ENCODE measurements at regions of chr3 and their contacts with region 1.

Region 1: DNA sequence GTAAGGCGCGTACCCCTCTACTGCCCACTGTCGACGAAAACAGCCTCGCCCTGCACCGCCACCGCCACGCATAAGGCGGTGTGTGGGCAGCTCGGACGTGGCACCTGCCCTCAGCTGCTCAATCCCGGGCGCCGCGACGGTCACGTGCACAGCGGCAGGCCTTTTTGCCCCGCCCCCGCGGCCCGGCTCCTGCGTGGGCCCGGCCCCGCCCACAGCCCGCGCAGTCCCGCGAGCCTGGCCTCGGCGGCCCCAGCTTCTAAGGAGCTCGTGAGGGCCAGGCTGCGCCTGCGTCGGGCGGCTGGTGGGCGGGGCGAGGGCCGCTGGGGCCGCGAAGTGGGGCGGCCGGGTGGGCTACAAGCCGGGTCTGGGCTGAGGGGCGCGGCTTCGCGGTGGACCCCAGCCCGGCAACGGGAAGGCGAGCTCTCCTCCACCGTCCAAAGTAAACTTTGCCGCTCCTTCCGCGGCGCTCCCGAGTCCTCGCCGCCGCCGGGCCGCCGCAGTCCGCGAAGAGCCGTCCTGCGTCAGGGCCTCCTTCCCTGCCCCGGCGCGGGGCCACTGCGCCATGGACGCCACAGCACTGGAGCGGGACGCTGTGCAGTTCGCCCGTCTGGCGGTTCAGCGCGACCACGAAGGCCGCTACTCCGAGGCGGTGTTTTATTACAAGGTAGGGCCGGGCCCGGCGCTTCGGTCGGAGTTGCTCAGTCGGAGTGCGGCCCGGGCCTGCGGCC is at the start of gene CAPN7:
- DNase-seq: peak; percentile 99
- H3K4me3 Mint-ChIP-seq: peak within 1 kb of the TSS; percentile 92
- H3K27ac Mint-ChIP-seq: peak within 1 kb of the TSS; percentile 93
- H3K4me1 Mint-ChIP-seq: peaks cover 18% of the 10 kb centered on the region
- H3K27me3 Mint-ChIP-seq: no peaks in the 10 kb centered on the region
- total RNA-seq, gene CAPN7: 25.4 and 29.9 TPM in 2 replicates

Region 2: DNA sequence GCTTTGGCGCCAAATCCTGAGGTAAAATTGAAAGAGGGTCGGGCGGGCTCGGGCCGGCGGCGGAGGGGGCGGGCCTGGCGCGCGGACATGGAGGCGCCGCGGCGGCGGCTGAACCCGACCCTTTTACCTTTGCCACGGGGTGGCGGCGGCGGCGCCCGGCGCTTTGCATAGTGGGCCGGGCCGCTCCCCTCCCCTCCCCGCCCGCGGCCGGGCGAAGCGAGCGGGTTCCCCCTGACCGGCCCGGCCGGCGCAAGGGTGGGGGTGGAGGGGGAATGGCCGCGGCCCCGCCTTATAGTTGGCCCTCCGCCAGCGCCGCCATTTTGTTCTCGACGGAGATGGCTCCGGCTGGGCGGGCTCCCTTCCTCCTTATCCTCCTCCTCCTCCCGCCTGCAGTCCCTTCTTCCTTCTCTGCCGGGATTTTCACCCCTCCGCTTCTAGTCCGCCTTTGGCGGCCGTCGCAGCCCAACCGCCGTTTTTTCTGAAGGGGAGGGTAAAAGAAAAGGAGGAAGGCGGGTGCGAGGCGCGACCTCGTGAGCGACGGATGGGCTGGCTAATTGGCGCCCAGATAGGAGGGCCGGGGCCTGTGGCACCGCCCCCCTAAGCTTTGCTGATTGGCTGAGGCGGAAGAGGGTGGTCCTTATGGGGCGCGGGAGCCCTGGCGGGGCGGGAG is 258.1 kb before region 1 on chr3:
- intact Hi-C with region 1: loop called (anchors 1 kb)
- DNase-seq: peak; percentile 99
- H3K4me3 Mint-ChIP-seq: peak overlapping the region; percentile 100
- H3K27ac Mint-ChIP-seq: peak overlapping the region; percentile 100
- H3K4me1 Mint-ChIP-seq: peaks cover 32% of the 10 kb centered on the region
- H3K27me3 Mint-ChIP-seq: no peaks in the 10 kb centered on the region

Region 3: DNA sequence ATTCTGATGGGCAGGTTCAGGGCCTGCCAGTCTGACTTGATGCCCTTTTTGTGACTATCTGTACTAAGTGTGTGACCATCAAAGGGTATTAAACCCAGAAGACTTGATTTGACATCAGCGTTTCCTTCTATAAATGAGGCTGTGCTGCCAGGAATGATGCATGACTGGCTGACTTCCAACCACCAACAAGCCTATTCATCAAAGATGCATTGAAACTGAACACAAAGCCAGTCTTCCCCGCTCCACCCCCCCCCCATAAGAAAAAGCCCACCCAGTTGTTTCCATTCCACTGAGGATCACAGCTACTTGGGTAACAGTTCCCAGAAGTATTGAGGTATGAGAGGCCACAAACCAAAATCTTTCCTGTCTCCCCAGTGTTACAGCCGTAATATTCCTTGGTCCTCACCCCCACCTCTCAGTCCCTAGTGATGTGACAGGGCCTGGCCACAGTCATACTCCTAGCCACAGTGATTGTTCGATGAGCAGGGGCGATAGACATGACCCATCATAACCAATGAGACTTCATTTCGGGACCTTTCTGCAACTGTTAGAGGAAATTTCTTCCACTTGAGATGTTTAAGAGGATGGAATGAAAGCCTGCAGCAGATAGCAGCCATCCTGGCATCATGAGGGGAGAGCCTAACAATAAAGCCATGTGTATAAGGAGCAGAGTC is 103.7 kb after region 1 on chr3:
- intact Hi-C with region 1: loop called (anchors 5 kb)
- DNase-seq: no peak
- H3K4me3 Mint-ChIP-seq: peak overlapping the region; percentile 72
- H3K27ac Mint-ChIP-seq: peak overlapping the region; percentile 94
- H3K4me1 Mint-ChIP-seq: peaks cover 54% of the 10 kb centered on the region
- H3K27me3 Mint-ChIP-seq: no peaks in the 10 kb centered on the region

Region 4: GRCh38 chr3:15427182-15427880 is 221.2 kb after region 1 on chr3 and contains the starts of genes EAF1 and METTL6:
- intact Hi-C with region 1: loop called (anchors 1 kb)
- DNase-seq: peak; percentile 96
- H3K4me3 Mint-ChIP-seq: peak within 1 kb of the TSS; percentile 96
- H3K27ac Mint-ChIP-seq: peak within 1 kb of the TSS; percentile 95
- H3K4me1 Mint-ChIP-seq: peaks cover 47% of the 10 kb centered on the region
- H3K27me3 Mint-ChIP-seq: no peaks in the 10 kb centered on the region
- total RNA-seq, gene EAF1: 24.2 and 25.7 TPM in 2 replicates
- total RNA-seq, gene METTL6: 15.2 and 17.4 TPM in 2 replicates

Region 5: GRCh38 chr3:15815696-15816095 is 609.6 kb after region 1 on chr3:
- intact Hi-C with region 1: loop called (anchors 10 kb)
- DNase-seq: no peak
- H3K4me3 Mint-ChIP-seq: no peak overlapping the region
- H3K27ac Mint-ChIP-seq: no peak overlapping the region
- H3K4me1 Mint-ChIP-seq: peaks cover 23% of the 10 kb centered on the region
- H3K27me3 Mint-ChIP-seq: no peaks in the 10 kb centered on the region

Region 6: GRCh38 chr3:16247276-16248061 is 1041.4 kb after region 1 on chr3:
- intact Hi-C with region 1: loop called (anchors 2 kb)
- DNase-seq: peak; percentile 94
- H3K4me3 Mint-ChIP-seq: no peak overlapping the region
- H3K27ac Mint-ChIP-seq: no peak overlapping the region
- H3K4me1 Mint-ChIP-seq: peaks cover 28% of the 10 kb centered on the region
- H3K27me3 Mint-ChIP-seq: no peaks in the 10 kb centered on the region